A673 (cell line): ENCODE measurements at regions of chr11 and their contacts with region 1.

Region 1: GRCh38 chr11:20647976-20648565 is 21.3 kb upstream of the NELL1 start:
- DNase-seq: peak; percentile 55
- H3K4me3 ChIP-seq: no peak overlapping the region
- H3K27ac ChIP-seq: no peak overlapping the region
- H3K4me1 ChIP-seq: no peaks in the 10 kb centered on the region
- H3K27me3 ChIP-seq: no peaks in the 10 kb centered on the region
- CTCF ChIP-seq: peak; percentile 77

Region 2: DNA sequence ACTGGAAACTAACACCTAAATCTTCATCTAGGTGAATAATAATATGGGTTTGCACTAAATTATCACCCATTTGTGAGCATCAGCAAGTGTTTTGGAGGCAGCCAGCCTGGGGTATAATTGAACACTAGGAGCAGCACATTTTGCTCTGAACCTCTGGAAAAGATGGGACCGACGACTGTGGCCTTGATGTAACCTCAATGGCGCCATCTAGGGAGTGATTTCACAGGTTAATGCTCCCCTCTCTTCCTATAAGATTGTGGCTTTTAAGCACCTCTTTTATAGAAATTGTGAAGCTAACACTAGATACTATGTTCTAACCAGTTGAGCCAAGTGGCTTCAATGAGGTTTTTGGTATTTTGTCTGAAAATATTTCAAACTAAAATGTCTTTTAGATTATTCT is 225.0 kb after region 1 on chr11:
- CTCF ChIA-PET with region 1: no interaction called
- POLR2A ChIA-PET with region 1: no interaction called
- intact Hi-C with region 1: loop called (anchors 5 kb)
- DNase-seq: peak; percentile 58
- H3K4me3 ChIP-seq: no peak overlapping the region
- H3K27ac ChIP-seq: no peak overlapping the region
- H3K4me1 ChIP-seq: no peaks in the 10 kb centered on the region
- H3K27me3 ChIP-seq: no peaks in the 10 kb centered on the region
- CTCF ChIP-seq: peak; percentile 61